T-cell (primary cell): ENCODE measurements at regions of chr12 and their contacts with region 1.

Region 1: DNA sequence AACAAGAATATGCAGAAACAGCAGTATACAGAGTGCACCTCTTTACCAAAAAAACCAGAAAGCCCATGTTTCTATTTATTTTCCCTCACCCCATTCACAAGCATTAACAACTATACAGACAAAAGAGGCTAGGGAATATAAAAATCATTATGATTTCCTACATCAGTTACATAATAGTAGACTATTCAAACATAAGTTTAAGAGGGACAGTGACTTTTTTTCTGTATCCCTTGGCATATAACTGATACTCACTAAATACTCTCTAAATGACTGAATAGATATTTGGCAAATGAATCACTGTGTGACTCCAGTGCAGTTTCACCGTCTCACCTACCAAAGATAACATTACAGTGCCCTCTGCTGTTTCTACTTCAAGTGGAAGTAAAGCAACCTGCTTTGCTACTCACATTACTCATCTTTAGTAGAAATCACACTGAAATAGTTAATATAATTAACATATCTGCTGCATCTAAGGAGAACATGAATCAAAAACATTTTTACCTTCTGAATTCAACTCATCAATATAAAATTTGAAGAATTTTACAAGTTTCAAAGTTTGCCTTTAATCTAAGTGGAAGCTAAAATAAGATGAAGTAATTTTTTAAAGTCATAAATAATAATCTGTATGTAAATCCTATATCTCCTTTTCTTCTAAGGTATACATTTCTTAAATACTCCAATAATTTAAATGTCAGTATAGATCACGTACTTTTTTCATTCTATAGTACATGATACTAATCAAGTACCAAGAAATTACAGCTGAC is 103.8 kb downstream of the OSBPL8 start:
- DNase-seq: peak in 4 of 35 experiments; percentile 4 to 62 (median 9)
- ATAC-seq: peak in 3 of 4 experiments; percentile 62 to 76 (median 73)
- H3K4me3 ChIP-seq: no peak overlapping the region
- H3K4me3 Mint-ChIP-seq: no peak overlapping the region
- H3K27ac ChIP-seq: peak overlapping the region; percentile 70
- H3K27ac Mint-ChIP-seq: peak overlapping the region; percentile 0 to 44
- H3K4me1 ChIP-seq: peaks cover 10% of the 10 kb centered on the region in 2 experiments
- H3K4me1 Mint-ChIP-seq: peaks cover 41 to 49% (median 45%) of the 10 kb centered on the region in 3 donors
- H3K27me3 ChIP-seq: no peaks in the 10 kb centered on the region
- H3K27me3 Mint-ChIP-seq: no peaks in the 10 kb centered on the region

Region 2: DNA sequence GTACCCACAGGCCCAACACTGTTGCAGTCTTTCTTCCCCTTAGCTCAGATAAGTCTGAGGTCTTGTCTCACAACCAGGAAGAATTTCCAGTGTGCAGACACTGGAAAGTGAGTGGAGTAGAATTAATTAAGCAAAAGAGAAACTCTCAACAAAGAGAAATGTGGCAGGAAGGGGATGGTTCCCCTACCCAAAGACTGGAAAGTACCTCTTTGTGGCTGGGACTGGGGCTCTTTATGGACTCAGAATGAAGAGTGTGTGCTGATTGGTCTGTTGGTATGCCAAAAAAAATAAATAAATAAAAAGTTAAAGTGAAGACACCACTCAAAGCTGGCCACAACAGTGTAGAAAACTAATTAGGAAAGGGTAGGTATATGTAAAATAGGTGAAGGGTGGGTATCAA is 1094.8 kb before region 1 on chr12:
- CTCF ChIA-PET with region 1: no interaction called
- POLR2A ChIA-PET with region 1: no interaction called
- DNase-seq: peak in 1 of 35 experiments; percentile 14
- ATAC-seq: peak in 1 of 4 experiments; percentile 52
- H3K4me3 ChIP-seq: no peak overlapping the region
- H3K4me3 Mint-ChIP-seq: no peak overlapping the region
- H3K27ac ChIP-seq: no peak overlapping the region
- H3K27ac Mint-ChIP-seq: peak overlapping the region; percentile 6 to 37
- H3K4me1 ChIP-seq: peaks cover 0 to 2% of the 10 kb centered on the region in 2 experiments
- H3K4me1 Mint-ChIP-seq: peaks cover 5 to 10% (median 7%) of the 10 kb centered on the region in 3 donors
- H3K27me3 ChIP-seq: no peaks in the 10 kb centered on the region
- H3K27me3 Mint-ChIP-seq: no peaks in the 10 kb centered on the region

Region 3: DNA sequence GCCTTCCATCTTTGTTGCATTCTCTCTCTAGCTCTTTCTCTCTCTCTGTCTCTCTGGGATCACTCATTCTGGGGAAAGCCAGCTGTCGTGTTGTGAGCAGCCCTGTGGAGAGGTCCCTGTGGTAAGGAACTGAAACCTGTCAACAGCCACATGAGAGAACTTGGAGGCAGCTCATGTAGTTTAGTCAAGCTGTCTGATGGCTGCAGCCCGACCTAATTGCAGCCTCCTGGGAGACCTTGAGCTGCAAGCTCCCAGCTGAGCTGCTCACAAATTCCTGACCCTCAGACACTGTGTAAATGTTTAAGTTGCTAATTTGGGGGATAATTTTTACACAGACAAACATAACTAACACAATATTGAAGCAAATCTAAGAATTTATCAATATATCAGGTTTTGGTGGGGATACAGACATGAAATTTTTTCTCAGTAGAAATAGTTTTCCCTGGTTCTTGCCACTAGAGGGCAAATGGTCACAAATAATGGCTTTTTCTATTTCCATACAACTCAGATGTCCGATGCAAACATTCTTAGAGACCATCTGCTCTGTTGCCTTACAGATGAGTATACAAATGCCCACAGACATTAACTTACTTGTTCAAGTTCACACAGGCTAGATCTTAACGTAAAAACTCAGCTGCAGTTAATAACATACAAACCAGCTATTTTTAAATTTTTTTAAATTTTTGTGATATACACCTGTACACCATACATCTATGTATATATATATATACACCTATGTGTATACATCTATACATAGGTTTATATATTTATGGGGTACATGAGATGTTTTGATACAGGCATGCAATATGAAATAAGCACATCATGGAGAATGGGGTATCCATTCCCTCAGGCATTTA is 928.9 kb before region 1 on chr12:
- CTCF ChIA-PET with region 1: interaction called, 3 to 15 read pairs
- POLR2A ChIA-PET with region 1: no interaction called
- DNase-seq: peak in 3 of 35 experiments; percentile 1 to 59 (median 5)
- ATAC-seq: peak in 1 of 4 experiments; percentile 35
- H3K4me3 ChIP-seq: no peak overlapping the region
- H3K4me3 Mint-ChIP-seq: no peak overlapping the region
- H3K27ac ChIP-seq: no peak overlapping the region
- H3K27ac Mint-ChIP-seq: no peak overlapping the region
- H3K4me1 ChIP-seq: peaks cover 0 to 3% of the 10 kb centered on the region in 2 experiments
- H3K4me1 Mint-ChIP-seq: peaks cover 0 to 3% (median 0%) of the 10 kb centered on the region in 3 donors
- H3K27me3 ChIP-seq: peaks cover 0 to 3% of the 10 kb centered on the region in 2 experiments
- H3K27me3 Mint-ChIP-seq: peaks cover 30 to 32% of the 10 kb centered on the region in 2 donors

Region 4: DNA sequence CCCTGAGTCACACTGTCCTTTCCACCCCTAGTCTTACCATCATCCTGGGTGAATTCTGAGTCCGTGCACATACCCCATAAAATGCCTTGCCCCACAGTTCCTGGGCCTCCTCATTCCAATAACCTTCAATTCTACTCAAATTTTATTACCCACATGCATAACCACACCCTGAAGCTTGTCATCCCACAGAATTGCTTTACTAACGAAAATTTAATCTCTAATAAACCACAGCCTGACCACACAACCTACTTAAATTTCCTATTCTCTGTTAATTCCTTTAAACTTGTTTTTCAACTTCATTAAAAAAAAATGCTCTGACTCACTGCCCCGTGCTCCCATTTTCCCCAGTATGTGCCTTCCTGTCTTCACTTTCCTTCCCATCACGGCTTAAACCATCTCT is 630.1 kb before region 1 on chr12:
- CTCF ChIA-PET with region 1: no interaction called
- POLR2A ChIA-PET with region 1: no interaction called
- DNase-seq: no peak
- ATAC-seq: no peak
- H3K4me3 ChIP-seq: no peak overlapping the region
- H3K4me3 Mint-ChIP-seq: no peak overlapping the region
- H3K27ac ChIP-seq: no peak overlapping the region
- H3K27ac Mint-ChIP-seq: no peak overlapping the region
- H3K4me1 ChIP-seq: no peaks in the 10 kb centered on the region
- H3K4me1 Mint-ChIP-seq: no peaks in the 10 kb centered on the region
- H3K27me3 ChIP-seq: no peaks in the 10 kb centered on the region
- H3K27me3 Mint-ChIP-seq: no peaks in the 10 kb centered on the region

Region 5: DNA sequence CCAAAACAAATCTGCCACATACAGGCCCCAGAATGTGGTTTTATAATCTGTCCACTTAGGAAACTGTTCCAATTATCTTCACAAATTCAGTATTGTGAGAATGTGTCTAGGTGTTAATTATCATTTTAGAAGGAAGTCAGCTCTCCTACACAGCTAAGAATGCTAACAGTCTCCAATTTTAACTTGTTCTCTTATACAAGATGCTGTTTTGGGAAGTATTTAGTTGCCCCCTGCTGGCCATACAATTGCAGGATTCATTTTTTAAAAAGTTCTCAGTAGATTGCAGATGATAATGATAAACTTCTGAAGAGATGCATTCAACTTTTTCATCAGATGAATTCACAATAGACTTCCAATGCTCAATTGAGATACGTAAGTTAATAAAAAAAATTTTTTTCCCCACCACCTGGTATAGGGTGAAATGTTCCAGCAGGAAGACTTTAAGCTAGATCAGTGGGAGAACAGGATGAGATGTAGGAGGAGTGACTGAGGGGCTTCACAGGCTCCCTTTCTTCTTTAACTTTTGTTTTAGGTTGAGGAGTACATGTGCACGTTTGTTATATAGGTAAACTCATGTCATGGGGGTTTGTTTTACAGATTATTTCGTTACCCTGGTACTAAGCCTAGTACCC is 131.1 kb after region 1 on chr12:
- CTCF ChIA-PET with region 1: interaction called in 1 of 2 experiments, 10 read pairs
- POLR2A ChIA-PET with region 1: no interaction called
- DNase-seq: peak in 30 of 35 experiments; percentile 2 to 73 (median 32)
- ATAC-seq: peak; percentile 58 to 70 (median 64)
- H3K4me3 ChIP-seq: no peak overlapping the region
- H3K4me3 Mint-ChIP-seq: no peak overlapping the region
- H3K27ac ChIP-seq: no peak overlapping the region
- H3K27ac Mint-ChIP-seq: peak overlapping the region in 1 of 2 donors; percentile 22
- H3K4me1 ChIP-seq: no peaks in the 10 kb centered on the region
- H3K4me1 Mint-ChIP-seq: peaks cover 0 to 1% (median 0%) of the 10 kb centered on the region in 3 donors
- H3K27me3 ChIP-seq: no peaks in the 10 kb centered on the region
- H3K27me3 Mint-ChIP-seq: no peaks in the 10 kb centered on the region

Region 6: DNA sequence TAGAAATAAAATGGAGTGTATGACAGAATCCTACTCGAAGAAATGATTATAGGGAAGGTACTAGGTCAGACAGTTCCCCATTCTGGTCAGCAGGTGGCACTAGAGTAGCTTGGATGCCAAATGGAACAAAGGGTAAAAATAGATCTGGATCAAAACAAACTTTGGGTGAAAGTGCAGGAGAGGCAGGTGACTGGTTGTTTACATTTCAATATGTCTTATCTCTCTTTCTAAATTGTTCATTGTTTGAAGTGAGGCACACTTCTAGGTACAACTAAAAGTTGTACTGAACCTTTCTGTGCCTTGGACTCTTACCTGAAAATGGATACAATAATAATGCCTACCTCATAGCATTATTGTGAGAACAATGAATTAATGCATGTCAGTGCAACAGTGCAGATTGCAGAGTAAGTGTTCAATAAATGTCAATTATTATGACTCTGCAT is 165.8 kb after region 1 on chr12:
- CTCF ChIA-PET with region 1: no interaction called
- POLR2A ChIA-PET with region 1: no interaction called
- DNase-seq: peak; percentile 26 to 85 (median 60)
- ATAC-seq: peak; percentile 67 to 83 (median 77)
- H3K4me3 ChIP-seq: no peak overlapping the region
- H3K4me3 Mint-ChIP-seq: no peak overlapping the region
- H3K27ac ChIP-seq: no peak overlapping the region
- H3K27ac Mint-ChIP-seq: no peak overlapping the region
- H3K4me1 ChIP-seq: no peaks in the 10 kb centered on the region
- H3K4me1 Mint-ChIP-seq: peaks cover 4 to 7% (median 5%) of the 10 kb centered on the region in 3 donors
- H3K27me3 ChIP-seq: no peaks in the 10 kb centered on the region
- H3K27me3 Mint-ChIP-seq: peaks cover 0 to 2% of the 10 kb centered on the region in 2 donors